ENCODE measurements at regions of chr17 and their contacts with region 1.

Region 1: DNA sequence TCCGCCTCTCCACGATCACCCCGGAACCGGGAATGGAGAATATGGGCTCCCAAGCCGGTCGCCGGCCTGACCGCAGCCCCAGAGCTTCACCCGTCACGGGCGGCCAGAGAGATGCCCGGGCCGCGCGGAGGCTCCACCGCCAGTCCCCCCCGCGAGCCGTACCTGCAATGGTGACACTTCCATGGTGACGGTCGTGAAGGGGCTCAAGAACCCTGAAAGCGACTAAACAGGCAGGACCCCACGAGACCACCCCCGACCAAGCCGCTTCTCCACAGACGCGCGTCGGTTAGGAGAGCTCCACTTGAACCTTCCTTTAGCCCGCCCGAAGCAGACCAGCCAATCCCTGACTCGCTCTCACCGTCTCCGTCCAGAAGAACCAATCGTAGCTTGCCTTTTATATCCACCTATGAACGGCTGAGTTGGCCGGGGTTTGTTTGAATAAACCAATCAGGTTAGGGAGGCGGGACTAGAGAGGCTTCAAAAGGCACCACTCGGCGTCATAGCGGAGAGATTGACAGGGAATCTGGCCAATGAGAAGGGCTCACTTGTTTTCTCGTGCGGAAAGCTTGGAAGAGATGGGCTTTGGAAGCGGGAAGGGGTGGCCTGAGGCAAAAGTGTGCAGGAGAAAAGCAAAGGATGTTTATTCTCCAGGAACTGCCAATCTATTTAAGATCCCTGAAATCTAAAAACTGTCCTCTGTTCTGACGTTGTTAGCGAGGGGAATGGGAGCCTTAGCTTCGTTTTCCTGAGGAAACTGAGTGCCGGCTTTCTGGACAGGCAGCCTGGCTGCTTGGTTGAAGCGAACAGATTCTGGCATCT is at the start of gene TOP2A:
- DNase-seq: peak; percentile 98
- H3K4me3 Mint-ChIP-seq: peak within 1 kb of the TSS; percentile 99
- H3K27ac Mint-ChIP-seq: peak within 1 kb of the TSS; percentile 89
- H3K4me1 Mint-ChIP-seq: peaks cover 30% of the 10 kb centered on the region
- H3K27me3 Mint-ChIP-seq: no peaks in the 10 kb centered on the region
- total RNA-seq, gene TOP2A: 301 to 311 TPM

Region 2: DNA sequence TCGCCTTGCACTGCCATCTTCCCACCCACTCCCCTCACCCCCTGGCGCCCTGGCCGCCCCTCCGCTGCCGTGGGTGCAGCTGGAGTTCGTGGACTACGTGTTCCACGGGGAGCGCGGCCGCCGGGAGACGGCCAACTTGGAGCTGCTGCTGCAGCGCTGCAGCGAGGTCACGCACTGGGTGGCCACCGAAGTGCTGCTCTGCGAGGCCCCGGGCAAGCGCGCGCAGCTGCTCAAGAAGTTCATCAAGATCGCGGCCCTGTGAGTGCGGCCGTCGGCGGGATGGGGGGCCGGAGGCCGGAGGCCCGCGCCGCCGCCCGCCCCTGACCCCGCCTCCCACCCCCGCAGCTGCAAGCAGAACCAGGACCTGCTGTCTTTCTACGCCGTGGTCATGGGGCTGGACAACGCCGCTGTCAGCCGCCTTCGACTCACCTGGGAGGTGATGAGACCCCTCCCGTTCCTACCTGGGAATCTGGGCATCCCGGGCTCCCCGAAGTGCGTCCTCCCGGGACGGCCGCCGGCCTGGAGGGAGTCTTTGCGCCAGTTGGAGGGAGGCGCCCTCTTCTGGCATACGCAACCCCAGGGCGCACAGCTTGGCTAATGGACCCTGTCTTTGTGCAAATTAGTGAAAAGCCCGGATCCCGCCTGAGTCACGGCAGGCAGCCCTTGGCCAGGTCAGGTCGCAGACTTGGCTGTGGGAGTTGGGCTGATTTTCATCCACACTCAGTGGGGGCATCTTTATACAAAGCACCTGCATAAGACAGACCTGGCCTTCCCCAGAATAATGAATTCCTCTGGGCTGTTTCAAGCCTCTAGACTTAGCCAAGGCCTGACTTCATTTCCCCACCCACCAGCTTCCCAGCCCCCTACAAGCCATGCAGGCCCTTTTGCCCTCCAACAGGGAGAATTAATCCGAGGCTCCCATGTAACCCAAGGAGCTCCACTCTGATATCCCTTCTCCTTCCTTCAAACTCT is 226.3 kb before region 1 on chr17:
- CTCF ChIA-PET with region 1: no interaction called
- POLR2A ChIA-PET with region 1: no interaction called
- intact Hi-C with region 1: no loop called
- DNase-seq: peak; percentile 80
- H3K4me3 Mint-ChIP-seq: peak overlapping the region; percentile 90
- H3K27ac Mint-ChIP-seq: no peak overlapping the region
- H3K4me1 Mint-ChIP-seq: peaks cover 8% of the 10 kb centered on the region
- H3K27me3 Mint-ChIP-seq: no peaks in the 10 kb centered on the region

Region 3: GRCh38 chr17:40362696-40363110 is 55.1 kb before region 1 on chr17:
- CTCF ChIA-PET with region 1: interaction called, 30 read pairs
- POLR2A ChIA-PET with region 1: no interaction called
- intact Hi-C with region 1: loop called (anchors 2 kb)
- DNase-seq: peak; percentile 93
- H3K4me3 Mint-ChIP-seq: peak overlapping the region; percentile 42
- H3K27ac Mint-ChIP-seq: no peak overlapping the region
- H3K4me1 Mint-ChIP-seq: peaks cover 10% of the 10 kb centered on the region
- H3K27me3 Mint-ChIP-seq: peaks cover 14% of the 10 kb centered on the region

Region 4: DNA sequence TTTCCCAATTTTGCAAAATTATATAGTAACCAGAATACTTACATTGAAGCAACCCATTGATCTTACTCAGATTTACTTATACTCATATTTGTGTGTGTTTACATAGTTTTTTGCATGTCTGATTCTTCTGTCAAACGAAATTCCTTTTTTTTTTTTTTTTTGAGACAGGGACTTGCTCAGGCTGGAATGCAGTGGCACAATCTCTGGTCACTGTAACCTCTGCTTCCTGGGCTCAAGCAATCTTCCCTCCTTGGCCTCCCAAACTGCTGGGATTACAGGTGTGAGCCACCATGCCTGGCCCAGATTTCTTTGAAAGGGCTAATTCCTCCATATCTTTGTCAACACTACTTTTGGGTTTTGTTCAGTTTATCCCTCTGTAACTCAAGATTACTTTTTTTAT is 30.1 kb before region 1 on chr17:
- CTCF ChIA-PET with region 1: interaction called, 10 read pairs
- POLR2A ChIA-PET with region 1: no interaction called
- intact Hi-C with region 1: no loop called
- DNase-seq: no peak
- H3K4me3 Mint-ChIP-seq: no peak overlapping the region
- H3K27ac Mint-ChIP-seq: no peak overlapping the region
- H3K4me1 Mint-ChIP-seq: no peaks in the 10 kb centered on the region
- H3K27me3 Mint-ChIP-seq: no peaks in the 10 kb centered on the region

Region 5: GRCh38 chr17:40443583-40444327 is 25.9 kb after region 1 on chr17:
- CTCF ChIA-PET with region 1: interaction called, 18 read pairs
- POLR2A ChIA-PET with region 1: interaction called, 3 read pairs
- intact Hi-C with region 1: loop called (anchors 1 kb)
- DNase-seq: peak; percentile 76
- H3K4me3 Mint-ChIP-seq: peak overlapping the region; percentile 65
- H3K27ac Mint-ChIP-seq: peak overlapping the region; percentile 82
- H3K4me1 Mint-ChIP-seq: peaks cover 41% of the 10 kb centered on the region
- H3K27me3 Mint-ChIP-seq: peaks cover 1% of the 10 kb centered on the region

Region 6: GRCh38 chr17:40707720-40708119 is 289.9 kb after region 1 on chr17:
- CTCF ChIA-PET with region 1: no interaction called
- POLR2A ChIA-PET with region 1: no interaction called
- intact Hi-C with region 1: no loop called
- DNase-seq: no peak
- H3K4me3 Mint-ChIP-seq: no peak overlapping the region
- H3K27ac Mint-ChIP-seq: no peak overlapping the region
- H3K4me1 Mint-ChIP-seq: no peaks in the 10 kb centered on the region
- H3K27me3 Mint-ChIP-seq: peaks cover 16% of the 10 kb centered on the region

Measured in activated CD4-positive, alpha-beta memory T cell treated with anti-CD3 and anti-CD28 coated beads for 36 hours (primary cell).